IMR-90 (cell line): ENCODE measurements at regions of chr17 and their contacts with region 1.

Region 1: GRCh38 chr17:55527540-55528118 is 16.4 kb upstream of the SMIM36 start:
- DNase-seq: peak; percentile 65
- ATAC-seq: peak; percentile 70
- H3K4me3 ChIP-seq: no peak overlapping the region
- H3K27ac ChIP-seq: no peak overlapping the region
- H3K4me1 ChIP-seq: no peaks in the 10 kb centered on the region
- H3K27me3 ChIP-seq: no peaks in the 10 kb centered on the region; the same call in 1 of the 2 replicates
- CTCF ChIP-seq: peak; percentile 75
- POLR2A ChIP-seq: no peak
- RAD21 ChIP-seq: peak; percentile 78

Region 2: GRCh38 chr17:55452139-55452790 is 75.4 kb before region 1 on chr17:
- CTCF ChIA-PET with region 1: no interaction called
- POLR2A ChIA-PET with region 1: no interaction called
- dilution Hi-C with region 1: no loop called
- in situ Hi-C with region 1: no loop called
- intact Hi-C with region 1: no loop called
- DNase-seq: peak; percentile 81
- ATAC-seq: peak; percentile 50
- H3K4me3 ChIP-seq: no peak overlapping the region
- H3K27ac ChIP-seq: peak overlapping the region; percentile 97
- H3K4me1 ChIP-seq: peaks cover 27% of the 10 kb centered on the region
- H3K27me3 ChIP-seq: no peaks in the 10 kb centered on the region
- CTCF ChIP-seq: no peak
- POLR2A ChIP-seq: no peak
- RAD21 ChIP-seq: no peak

Region 3: DNA sequence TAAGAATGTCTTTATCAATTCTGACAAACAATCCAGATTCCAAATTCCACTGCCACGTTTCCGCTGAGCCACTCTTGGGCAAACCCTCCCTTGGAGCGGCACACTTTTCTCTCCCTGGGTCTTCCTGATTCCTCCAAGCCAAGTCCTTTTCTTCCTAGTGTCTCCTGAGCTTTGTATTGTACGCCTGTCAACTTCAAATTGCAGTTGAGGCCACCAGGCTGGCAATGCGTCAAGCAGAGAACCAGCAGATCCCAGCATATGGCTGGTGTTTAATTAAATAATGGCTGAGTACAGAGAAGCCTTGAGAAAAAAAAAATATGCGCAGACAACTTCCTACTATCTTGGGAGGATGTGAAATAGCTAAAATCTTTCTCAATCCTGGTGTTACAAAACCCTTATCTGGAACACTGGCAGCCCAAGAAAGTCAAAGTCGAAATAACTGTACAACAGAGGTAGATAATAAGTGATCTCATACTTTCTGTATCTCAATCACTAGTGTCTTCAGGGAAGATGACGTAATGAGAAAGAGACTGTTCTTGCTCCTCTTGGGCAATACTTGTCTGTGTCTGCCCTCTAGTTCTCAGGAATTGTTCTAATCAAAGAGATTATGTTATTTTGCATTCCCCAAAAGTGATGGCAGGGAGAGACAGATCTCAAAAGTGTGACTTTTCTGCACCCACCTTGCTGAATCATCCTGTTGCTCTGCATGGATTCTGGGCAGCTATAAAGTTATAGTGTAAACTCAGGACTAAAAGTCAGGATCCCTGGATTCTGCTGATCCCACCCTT is 31.3 kb before region 1 on chr17:
- CTCF ChIA-PET with region 1: no interaction called
- POLR2A ChIA-PET with region 1: no interaction called
- dilution Hi-C with region 1: no loop called
- in situ Hi-C with region 1: no loop called
- intact Hi-C with region 1: no loop called
- DNase-seq: peak; percentile 67
- ATAC-seq: peak; percentile 67
- H3K4me3 ChIP-seq: no peak overlapping the region
- H3K27ac ChIP-seq: peak overlapping the region; percentile 57; the same call in 1 of the 2 replicates
- H3K4me1 ChIP-seq: peaks cover 2% of the 10 kb centered on the region; the same call in 1 of the 2 replicates
- H3K27me3 ChIP-seq: peaks cover 2% of the 10 kb centered on the region; the same call in 1 of the 2 replicates
- CTCF ChIP-seq: no peak
- POLR2A ChIP-seq: no peak
- RAD21 ChIP-seq: no peak

Region 4: GRCh38 chr17:55601874-55602364 is 74.3 kb after region 1 on chr17:
- CTCF ChIA-PET with region 1: interaction called, 29 read pairs
- POLR2A ChIA-PET with region 1: no interaction called
- dilution Hi-C with region 1: no loop called
- in situ Hi-C with region 1: loop called (anchors 5 kb)
- intact Hi-C with region 1: loop called (anchors 1 kb)
- DNase-seq: peak; percentile 61
- ATAC-seq: peak; percentile 90
- H3K4me3 ChIP-seq: no peak overlapping the region
- H3K27ac ChIP-seq: peak overlapping the region; percentile 47; the same call in 1 of the 2 replicates
- H3K4me1 ChIP-seq: peaks cover 3% of the 10 kb centered on the region; the same call in 1 of the 2 replicates
- H3K27me3 ChIP-seq: peaks cover 3% of the 10 kb centered on the region; the same call in 1 of the 2 replicates
- CTCF ChIP-seq: peak; percentile 79
- POLR2A ChIP-seq: no peak
- RAD21 ChIP-seq: peak; percentile 82

Region 5: GRCh38 chr17:55717898-55718735 is 190.5 kb after region 1 on chr17:
- CTCF ChIA-PET with region 1: interaction called, 13 read pairs
- POLR2A ChIA-PET with region 1: no interaction called
- dilution Hi-C with region 1: no loop called
- in situ Hi-C with region 1: loop called (anchors 5 kb)
- intact Hi-C with region 1: loop called (anchors 1 kb)
- DNase-seq: peak; percentile 68
- ATAC-seq: peak; percentile 77
- H3K4me3 ChIP-seq: no peak overlapping the region
- H3K27ac ChIP-seq: no peak overlapping the region
- H3K4me1 ChIP-seq: peaks cover 2% of the 10 kb centered on the region
- H3K27me3 ChIP-seq: peaks cover 5% of the 10 kb centered on the region; the same call in 1 of the 2 replicates
- CTCF ChIP-seq: peak; percentile 75
- POLR2A ChIP-seq: no peak
- RAD21 ChIP-seq: peak; percentile 55

Region 6: GRCh38 chr17:55825213-55825612 is 297.6 kb after region 1 on chr17:
- CTCF ChIA-PET with region 1: no interaction called
- POLR2A ChIA-PET with region 1: no interaction called
- dilution Hi-C with region 1: no loop called
- in situ Hi-C with region 1: no loop called
- intact Hi-C with region 1: loop called (anchors 2 kb)
- DNase-seq: no peak
- ATAC-seq: no peak
- H3K4me3 ChIP-seq: no peak overlapping the region
- H3K27ac ChIP-seq: no peak overlapping the region
- H3K4me1 ChIP-seq: no peaks in the 10 kb centered on the region
- H3K27me3 ChIP-seq: no peaks in the 10 kb centered on the region
- CTCF ChIP-seq: 0 out of 2 replicates have a peak, but pooled peaks have one; percentile 17
- POLR2A ChIP-seq: no peak
- RAD21 ChIP-seq: no peak

Region 7: DNA sequence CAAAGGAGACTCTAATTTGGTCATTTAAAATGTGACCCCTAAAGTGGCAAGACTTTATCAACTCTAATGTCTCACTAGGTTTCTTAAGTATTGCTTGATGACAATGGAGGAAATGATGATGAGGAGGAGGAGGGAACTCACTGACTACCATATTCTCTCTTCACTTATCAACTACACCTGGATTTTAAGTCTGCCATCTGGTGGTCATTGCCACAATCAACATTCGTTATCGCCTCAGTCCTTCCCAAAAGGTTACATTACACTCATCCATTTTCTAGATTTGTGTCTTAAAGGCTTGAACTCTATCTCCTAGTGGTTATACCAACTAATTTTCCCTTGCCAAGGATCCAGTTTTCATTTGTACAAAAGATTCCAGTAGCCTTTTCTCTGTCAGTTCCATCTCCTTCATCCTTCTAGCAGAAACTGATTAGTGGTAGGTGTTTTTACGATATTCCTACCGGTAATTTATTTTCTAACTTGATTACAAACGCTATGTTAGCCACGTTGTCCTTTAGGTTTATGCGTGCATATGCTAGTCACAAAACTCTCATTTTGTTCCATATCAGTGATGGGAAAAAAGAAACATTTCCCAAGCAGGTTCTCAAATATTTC is 951.3 kb after region 1 on chr17:
- CTCF ChIA-PET with region 1: no interaction called
- POLR2A ChIA-PET with region 1: no interaction called
- dilution Hi-C with region 1: no loop called
- in situ Hi-C with region 1: no loop called
- intact Hi-C with region 1: loop called (anchors 2 kb)
- DNase-seq: peak; percentile 25
- ATAC-seq: no peak
- H3K4me3 ChIP-seq: no peak overlapping the region
- H3K27ac ChIP-seq: no peak overlapping the region
- H3K4me1 ChIP-seq: no peaks in the 10 kb centered on the region
- H3K27me3 ChIP-seq: no peaks in the 10 kb centered on the region; the same call in 1 of the 2 replicates
- CTCF ChIP-seq: peak; percentile 48
- POLR2A ChIP-seq: no peak
- RAD21 ChIP-seq: peak; percentile 50